ENCODE measurements at regions of chr12 and their contacts with region 1.

Region 1: DNA sequence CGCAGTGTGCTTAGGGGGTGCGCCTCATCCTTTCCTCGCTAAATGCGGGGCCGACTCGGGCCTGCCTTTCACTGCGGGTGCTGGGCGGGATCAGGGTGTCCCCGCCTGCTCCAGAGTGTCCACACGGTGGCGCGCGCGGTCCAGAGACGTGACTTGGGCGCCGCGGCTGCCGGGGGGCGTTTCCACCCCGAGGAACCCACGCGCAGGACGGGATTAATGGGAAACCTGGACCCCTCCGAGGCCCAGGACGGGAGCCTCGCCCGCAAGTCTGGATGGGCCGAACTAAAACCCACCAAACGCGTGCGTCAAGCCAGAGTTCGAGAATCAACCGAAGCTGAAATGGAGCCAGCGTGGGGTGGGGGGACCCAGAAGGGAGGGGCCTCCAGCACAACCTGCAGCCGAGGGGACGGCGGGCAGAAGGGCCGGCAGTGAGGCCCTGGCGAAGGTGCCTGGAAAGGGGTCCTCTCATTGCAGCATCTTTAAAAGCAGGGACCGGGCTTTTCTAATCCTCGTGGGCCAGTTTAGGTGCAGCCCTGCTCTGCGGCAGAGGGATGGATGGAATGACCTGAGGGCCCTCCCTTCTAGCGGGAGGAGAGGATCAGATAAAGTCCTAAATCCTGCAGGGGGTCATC is 93.3 kb downstream of the NINJ2 start:
- DNase-seq: peak; percentile 83 to 89 (median 88)
- ATAC-seq: peak; percentile 93
- H3K4me3 ChIP-seq: peak overlapping the region; percentile 56
- H3K27ac ChIP-seq: peak overlapping the region; percentile 34; the same call in 1 of the 3 replicates
- H3K4me1 ChIP-seq: peaks cover 15 to 39% of the 10 kb centered on the region in 2 experiments; a peak in 4 of 5 replicates
- H3K27me3 ChIP-seq: no peaks in the 10 kb centered on the region
- CTCF ChIP-seq: peak; percentile 77 to 89 (median 82)
- EP300 ChIP-seq: no peak
- POLR2A ChIP-seq: no peak
- RAD21 ChIP-seq: peak; percentile 87 to 88

Region 2: DNA sequence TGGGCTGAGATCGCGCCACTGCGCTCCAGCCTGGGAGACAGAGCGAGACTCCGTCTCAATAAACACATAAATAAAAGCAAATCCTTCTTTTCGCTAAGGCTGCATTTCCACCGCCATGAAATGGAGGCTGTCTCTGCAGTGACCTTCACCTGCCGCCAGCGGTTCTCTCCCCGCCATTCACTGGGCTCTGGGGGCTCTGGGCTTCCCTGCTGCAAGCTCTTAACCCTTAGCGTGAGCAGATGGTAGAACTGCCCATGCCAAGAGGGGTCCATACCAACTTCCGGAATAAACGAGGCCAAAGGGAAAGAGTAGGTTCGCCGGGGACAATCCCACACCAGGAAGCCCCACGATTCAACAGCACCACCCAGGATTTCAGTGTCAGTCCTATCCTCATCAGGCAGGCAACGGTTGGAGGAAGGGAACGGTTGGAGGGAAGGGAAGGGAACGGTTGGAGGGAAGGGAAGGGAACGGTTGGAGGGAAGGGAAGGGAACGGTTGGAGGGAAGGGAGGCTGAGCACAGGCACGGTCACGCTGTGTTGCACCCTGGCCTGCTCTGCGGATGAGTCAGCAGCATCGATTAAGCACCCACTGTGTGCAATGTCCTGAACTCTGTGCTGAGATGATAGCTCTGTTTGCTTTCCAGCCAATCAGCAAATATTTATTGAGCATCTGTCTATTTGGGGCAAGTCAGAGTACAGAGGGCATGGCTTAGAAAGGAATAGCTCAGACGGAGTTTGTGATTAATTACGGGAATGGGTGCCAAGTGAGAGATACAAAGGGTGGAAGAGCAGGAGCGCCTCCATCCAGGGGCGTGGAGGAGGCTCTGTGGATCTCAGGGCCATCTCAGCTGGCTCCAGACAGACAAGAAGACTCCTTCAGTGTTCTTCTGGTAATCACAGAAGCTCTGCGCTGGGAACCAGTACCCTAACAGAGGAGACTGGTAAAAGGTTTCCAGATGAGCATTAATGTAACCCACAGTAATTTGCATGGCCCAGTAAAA is 15.4 kb after region 1 on chr12:
- CTCF ChIA-PET with region 1: no interaction called
- POLR2A ChIA-PET with region 1: no interaction called
- in situ Hi-C with region 1: no loop called
- intact Hi-C with region 1: no loop called
- DNase-seq: no peak
- ATAC-seq: no peak
- H3K4me3 ChIP-seq: no peak overlapping the region
- H3K27ac ChIP-seq: no peak overlapping the region
- H3K4me1 ChIP-seq: peaks cover 20 to 26% of the 10 kb centered on the region in 2 experiments; a peak in 4 of 5 replicates
- H3K27me3 ChIP-seq: no peaks in the 10 kb centered on the region
- CTCF ChIP-seq: no peak
- EP300 ChIP-seq: no peak
- POLR2A ChIP-seq: no peak
- RAD21 ChIP-seq: no peak

Region 3: GRCh38 chr12:751192-751998 is 181.5 kb after region 1 on chr12:
- CTCF ChIA-PET with region 1: interaction called, 20 read pairs
- POLR2A ChIA-PET with region 1: interaction called, 5 read pairs
- in situ Hi-C with region 1: loop called (anchors 5 kb)
- intact Hi-C with region 1: no loop called
- DNase-seq: peak; percentile 67 to 96 (median 74)
- ATAC-seq: peak; percentile 70
- H3K4me3 ChIP-seq: peak overlapping the region; percentile 61
- H3K27ac ChIP-seq: peak overlapping the region; percentile 84
- H3K4me1 ChIP-seq: peaks cover 8 to 20% of the 10 kb centered on the region in 2 experiments; a peak in 4 of 5 replicates
- H3K27me3 ChIP-seq: no peaks in the 10 kb centered on the region
- CTCF ChIP-seq: peak; percentile 72 to 80 (median 74)
- EP300 ChIP-seq: peak; percentile 50
- POLR2A ChIP-seq: peak; percentile 78; the same call in 1 of the 2 replicates
- RAD21 ChIP-seq: peak; percentile 69 to 78

Region 4: DNA sequence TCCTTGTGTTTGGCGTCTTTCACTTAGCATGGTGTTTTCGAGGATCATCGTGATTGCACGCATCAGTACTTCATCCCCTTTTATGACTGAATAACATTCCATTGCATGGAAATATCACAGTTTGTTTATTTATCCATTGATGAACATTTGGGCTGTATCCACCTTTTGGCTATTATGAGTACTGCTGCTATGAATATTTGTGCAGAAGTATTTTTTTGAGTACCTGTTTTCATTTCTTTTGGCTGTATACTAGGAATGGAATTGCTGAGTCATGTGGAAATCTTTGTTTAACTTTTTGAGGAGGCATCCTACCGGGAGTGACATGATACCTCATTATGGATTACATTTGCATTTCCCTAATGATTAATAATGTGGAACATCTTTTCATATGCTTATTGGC is 248.8 kb after region 1 on chr12:
- CTCF ChIA-PET with region 1: interaction called, 17 read pairs
- POLR2A ChIA-PET with region 1: no interaction called
- in situ Hi-C with region 1: loop called (anchors 5 kb)
- intact Hi-C with region 1: loop called (anchors 5 kb)
- DNase-seq: no peak
- ATAC-seq: no peak
- H3K4me3 ChIP-seq: no peak overlapping the region
- H3K27ac ChIP-seq: no peak overlapping the region
- H3K4me1 ChIP-seq: no peaks in the 10 kb centered on the region; a peak in 2 of 5 replicates
- H3K27me3 ChIP-seq: no peaks in the 10 kb centered on the region
- CTCF ChIP-seq: no peak
- EP300 ChIP-seq: no peak
- POLR2A ChIP-seq: no peak
- RAD21 ChIP-seq: no peak

Region 5: DNA sequence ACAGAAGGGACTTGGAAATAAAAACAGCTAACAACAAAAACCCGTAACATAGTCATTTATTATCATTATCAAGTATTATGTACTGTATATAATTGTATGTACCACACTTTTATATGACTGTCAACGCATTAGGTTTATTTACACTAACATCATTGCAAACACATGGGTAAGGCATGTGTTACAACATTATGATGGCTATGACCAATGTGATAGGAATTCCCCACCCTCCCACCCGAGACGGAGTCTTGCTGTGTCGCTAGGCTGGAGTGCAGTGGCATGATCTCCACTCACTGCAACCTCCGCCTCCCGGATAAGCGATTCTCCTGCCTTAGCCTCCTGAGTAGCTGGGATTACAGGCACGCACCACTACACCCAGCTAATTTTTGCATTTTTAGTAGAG is 503.7 kb after region 1 on chr12:
- CTCF ChIA-PET with region 1: no interaction called
- POLR2A ChIA-PET with region 1: no interaction called
- in situ Hi-C with region 1: loop called (anchors 10 kb)
- intact Hi-C with region 1: no loop called
- DNase-seq: no peak
- ATAC-seq: no peak
- H3K4me3 ChIP-seq: no peak overlapping the region
- H3K27ac ChIP-seq: no peak overlapping the region
- H3K4me1 ChIP-seq: no peaks in the 10 kb centered on the region
- H3K27me3 ChIP-seq: no peaks in the 10 kb centered on the region
- CTCF ChIP-seq: no peak
- EP300 ChIP-seq: no peak
- POLR2A ChIP-seq: no peak
- RAD21 ChIP-seq: no peak

Region 6: DNA sequence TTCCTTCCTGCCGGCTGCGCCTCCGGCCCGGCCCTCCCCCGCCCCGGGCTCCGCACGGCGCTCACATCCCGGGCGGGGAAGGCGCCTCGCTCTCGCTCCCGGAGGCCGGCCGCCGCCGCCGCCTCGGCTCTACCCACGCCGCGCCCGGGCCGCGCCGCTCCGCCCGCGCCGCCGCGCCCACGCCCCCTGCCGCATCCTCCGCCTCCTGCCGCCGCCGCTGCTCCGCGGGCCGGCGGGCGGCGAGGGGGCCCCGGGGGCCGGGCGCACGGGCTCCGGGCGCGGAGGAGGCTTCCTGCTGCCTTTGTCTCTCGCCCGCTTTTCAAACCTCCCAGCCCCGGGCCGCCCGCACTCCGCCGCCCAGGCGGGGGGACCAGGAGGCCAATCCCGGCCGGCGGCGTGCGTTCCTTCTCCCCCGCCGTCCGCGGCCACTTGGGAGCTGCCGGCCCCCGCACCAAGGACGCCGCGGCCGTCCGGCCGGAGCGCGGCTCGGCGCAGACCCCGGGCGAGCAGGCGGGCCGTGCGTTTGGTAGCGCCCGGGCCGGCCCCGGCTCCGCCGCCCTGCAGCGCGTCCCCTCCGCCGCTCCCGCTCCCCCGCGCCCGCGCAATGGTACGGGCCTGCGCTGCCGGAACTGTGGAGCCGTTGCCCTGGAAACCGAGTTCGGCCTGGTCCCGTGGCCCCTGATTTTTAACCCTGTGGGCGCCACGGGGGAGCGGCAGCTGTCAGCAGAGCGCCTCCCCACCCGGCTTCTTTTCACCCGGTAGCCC is 1024.5 kb after region 1 on chr12 and contains the start of gene FBXL14:
- CTCF ChIA-PET with region 1: no interaction called
- POLR2A ChIA-PET with region 1: no interaction called
- in situ Hi-C with region 1: loop called (anchors 25 kb)
- intact Hi-C with region 1: no loop called
- DNase-seq: peak; percentile 77 to 91 (median 80)
- ATAC-seq: peak; percentile 80
- H3K4me3 ChIP-seq: peak within 1 kb of the TSS; percentile 62
- H3K27ac ChIP-seq: peak within 1 kb of the TSS; percentile 87
- H3K4me1 ChIP-seq: peaks cover 26 to 42% of the 10 kb centered on the region in 2 experiments; a peak in 4 of 5 replicates
- H3K27me3 ChIP-seq: no peaks in the 10 kb centered on the region
- CTCF ChIP-seq: no peak
- EP300 ChIP-seq: no peak
- POLR2A ChIP-seq: no peak
- RAD21 ChIP-seq: no peak
- polyA plus RNA-seq, gene FBXL14: 0.13 to 0.17 TPM